WTC11 (cell line): ENCODE measurements at regions of chrX and their contacts with region 1.

Region 1: DNA sequence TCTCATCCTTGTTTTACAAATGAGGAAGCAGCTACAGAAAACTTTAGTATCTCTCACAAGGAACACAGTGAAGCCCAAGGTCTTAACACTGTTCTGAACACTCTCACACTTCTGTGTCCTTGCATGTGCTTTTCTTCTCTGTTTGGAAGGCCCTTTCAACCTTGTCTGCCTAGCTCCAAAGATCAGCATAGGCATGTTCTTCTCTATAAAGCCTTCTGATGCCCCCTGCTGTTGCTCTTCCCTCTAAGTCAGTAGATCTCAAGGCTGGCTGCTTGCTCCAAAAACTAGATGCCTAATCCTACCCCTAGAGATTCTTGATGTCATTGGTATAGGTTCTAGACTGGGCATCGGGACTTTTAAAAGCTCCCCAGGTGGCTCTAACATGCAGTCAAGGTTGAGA is 5.9 kb downstream of the APOO start:
- DNase-seq: no peak
- ATAC-seq: peak; percentile 71
- H3K4me3 Mint-ChIP-seq: no peak overlapping the region
- H3K27ac Mint-ChIP-seq: no peak overlapping the region
- H3K4me1 Mint-ChIP-seq: peaks cover 30% of the 10 kb centered on the region
- H3K27me3 Mint-ChIP-seq: no peaks in the 10 kb centered on the region
- CTCF ChIP-seq: no peak

Region 2: DNA sequence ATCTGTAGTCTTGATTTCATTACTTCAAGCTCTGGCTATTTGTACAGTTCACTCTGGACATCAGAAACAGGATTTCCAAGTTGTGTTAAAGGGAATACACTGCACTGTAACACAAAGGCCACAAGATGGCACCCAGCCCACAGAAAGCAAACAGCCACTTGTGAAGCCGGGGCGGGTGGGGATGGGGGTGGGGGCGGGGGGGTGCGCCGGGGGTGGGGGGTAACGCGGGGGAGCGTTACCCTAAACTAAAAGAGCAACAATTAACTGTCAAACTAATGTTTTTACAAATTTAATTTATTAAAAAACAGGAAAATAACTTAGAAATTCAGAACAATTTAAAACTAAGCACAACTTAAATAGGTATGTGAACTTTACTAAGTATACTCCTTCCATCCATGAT is 207.2 kb before region 1 on chrX:
- CTCF ChIA-PET with region 1: interaction called, 16 read pairs
- POLR2A ChIA-PET with region 1: no interaction called
- DNase-seq: peak; percentile 18
- ATAC-seq: peak; percentile 61
- H3K4me3 Mint-ChIP-seq: no peak overlapping the region
- H3K27ac Mint-ChIP-seq: no peak overlapping the region
- H3K4me1 Mint-ChIP-seq: no peaks in the 10 kb centered on the region
- H3K27me3 Mint-ChIP-seq: no peaks in the 10 kb centered on the region
- CTCF ChIP-seq: no peak

Region 3: DNA sequence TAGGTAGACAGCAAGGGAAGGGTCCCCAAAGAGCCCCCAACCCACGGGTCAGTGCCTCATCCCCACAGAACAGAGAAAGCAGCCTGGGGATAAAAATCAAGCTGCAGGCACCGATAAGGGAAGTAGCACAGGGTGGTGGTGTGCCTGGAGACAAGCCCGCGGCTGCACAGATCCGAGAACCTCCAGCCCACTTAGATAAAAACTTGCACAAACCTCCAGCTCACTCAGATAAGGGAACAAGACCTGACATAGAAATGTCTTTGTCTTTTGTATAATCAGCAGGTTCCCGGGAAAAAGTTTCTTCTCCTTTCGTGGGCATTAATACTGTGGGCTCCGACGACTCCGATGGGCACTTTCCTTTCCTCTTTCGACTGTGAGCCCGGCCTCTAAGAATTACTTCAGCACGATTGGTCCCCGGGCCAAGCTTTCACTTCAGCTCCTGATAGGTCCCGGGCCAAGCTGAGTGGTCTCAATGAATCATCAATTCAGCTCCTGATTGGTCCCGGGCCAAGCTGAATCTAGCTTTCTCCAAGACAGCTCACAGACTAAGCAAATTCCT is 202.1 kb before region 1 on chrX:
- CTCF ChIA-PET with region 1: interaction called, 16 read pairs
- POLR2A ChIA-PET with region 1: no interaction called
- DNase-seq: peak; percentile 37
- ATAC-seq: peak; percentile 96
- H3K4me3 Mint-ChIP-seq: peak overlapping the region; percentile 8; the same call in 1 of the 2 replicates
- H3K27ac Mint-ChIP-seq: no peak overlapping the region
- H3K4me1 Mint-ChIP-seq: no peaks in the 10 kb centered on the region
- H3K27me3 Mint-ChIP-seq: no peaks in the 10 kb centered on the region
- CTCF ChIP-seq: no peak

Region 4: GRCh38 chrX:23759821-23760220 is 142.0 kb before region 1 on chrX:
- CTCF ChIA-PET with region 1: interaction called, 19 read pairs
- POLR2A ChIA-PET with region 1: no interaction called
- DNase-seq: no peak
- ATAC-seq: no peak
- H3K4me3 Mint-ChIP-seq: no peak overlapping the region
- H3K27ac Mint-ChIP-seq: no peak overlapping the region
- H3K4me1 Mint-ChIP-seq: peaks cover 8% of the 10 kb centered on the region
- H3K27me3 Mint-ChIP-seq: peaks cover 14% of the 10 kb centered on the region
- CTCF ChIP-seq: no peak

Region 5: GRCh38 chrX:23782863-23783568 is 118.8 kb before region 1 on chrX and contains the start of gene SAT1:
- CTCF ChIA-PET with region 1: interaction called, 27 read pairs
- POLR2A ChIA-PET with region 1: interaction called, 9 read pairs
- DNase-seq: peak; percentile 95
- ATAC-seq: peak; percentile 99
- H3K4me3 Mint-ChIP-seq: peak within 1 kb of the TSS; percentile 93
- H3K27ac Mint-ChIP-seq: peak within 1 kb of the TSS; percentile 94
- H3K4me1 Mint-ChIP-seq: peaks cover 23% of the 10 kb centered on the region
- H3K27me3 Mint-ChIP-seq: no peaks in the 10 kb centered on the region; the same call in 1 of the 2 replicates
- CTCF ChIP-seq: peak; percentile 55
- total RNA-seq, gene SAT1: 52.6 to 70.7 TPM (median 55.8 TPM) in 3 replicates

Region 6: DNA sequence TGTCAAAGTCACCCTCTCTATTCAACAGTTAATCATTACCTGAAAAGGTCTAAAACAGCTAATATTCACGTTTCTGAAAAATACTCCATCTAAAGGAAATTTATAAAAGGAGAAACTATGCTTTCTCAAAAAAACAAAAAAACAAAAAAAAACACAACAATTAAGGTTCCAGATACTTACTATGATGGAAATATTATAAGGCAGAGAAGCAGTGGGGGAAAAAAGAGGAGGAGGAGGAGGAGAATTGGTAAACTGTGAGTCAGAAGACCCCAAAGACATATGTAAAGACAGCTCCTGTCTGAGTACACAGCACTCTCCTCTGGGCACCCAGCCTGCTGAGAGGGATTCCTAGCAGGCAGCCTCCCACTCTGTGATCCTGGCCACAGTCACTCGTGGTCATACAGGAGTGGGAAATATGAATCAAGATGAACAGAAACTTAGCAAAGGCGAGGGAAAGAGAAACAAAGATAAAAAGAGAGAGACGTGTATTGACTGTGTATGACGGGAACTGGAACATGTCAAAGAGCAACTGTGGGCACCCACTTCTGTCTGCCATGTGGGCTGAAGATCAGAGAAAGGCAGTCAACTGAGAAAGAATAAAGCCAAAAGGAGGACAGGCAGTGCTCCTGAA is 112.7 kb after region 1 on chrX:
- CTCF ChIA-PET with region 1: no interaction called
- POLR2A ChIA-PET with region 1: no interaction called
- DNase-seq: no peak
- ATAC-seq: no peak
- H3K4me3 Mint-ChIP-seq: no peak overlapping the region
- H3K27ac Mint-ChIP-seq: peak overlapping the region; percentile 1; the same call in 1 of the 2 replicates
- H3K4me1 Mint-ChIP-seq: no peaks in the 10 kb centered on the region
- H3K27me3 Mint-ChIP-seq: no peaks in the 10 kb centered on the region
- CTCF ChIP-seq: no peak